ENCODE measurements at regions of chr5 and their contacts with region 1.

Region 1: DNA sequence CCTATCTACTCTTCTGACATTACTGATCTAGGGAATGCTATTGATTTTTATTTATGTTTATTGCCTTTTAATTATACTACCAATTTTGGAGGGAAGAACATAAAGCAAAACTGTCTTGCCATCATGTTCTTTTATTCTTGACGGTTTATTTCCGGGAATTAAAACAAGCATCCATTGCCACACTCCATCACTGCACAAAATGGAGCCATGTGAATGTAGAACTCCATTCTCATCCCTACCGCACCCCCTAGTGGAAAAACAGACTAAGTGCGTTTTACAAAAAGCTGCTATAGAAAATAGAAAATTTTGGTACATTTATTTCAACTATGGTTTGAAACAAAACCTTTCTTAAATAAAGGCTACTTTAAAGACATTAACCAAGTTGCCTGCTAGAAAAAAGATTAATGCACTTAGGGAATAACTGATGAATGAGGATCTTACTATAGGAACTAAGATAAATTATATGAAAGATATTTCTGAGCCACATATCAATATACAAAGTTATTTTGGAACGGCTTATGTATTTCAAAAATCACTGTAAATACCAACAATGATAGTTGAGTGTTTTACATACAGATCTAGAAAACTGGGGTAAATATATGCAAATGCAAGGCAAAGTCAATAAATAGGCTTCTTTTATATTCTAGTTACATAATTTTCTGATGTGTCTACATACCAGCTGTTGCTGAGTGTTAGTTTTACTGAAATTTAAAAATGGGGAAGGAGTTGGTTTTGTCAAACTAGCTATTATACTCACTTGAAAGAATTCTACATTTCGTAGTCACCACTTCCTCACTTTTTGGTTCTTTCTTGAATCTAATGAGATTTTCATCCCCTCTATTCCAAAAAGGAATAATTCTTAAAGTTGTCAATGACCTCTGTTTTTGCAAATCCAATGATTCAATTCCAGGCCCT is 26.5 kb downstream of the OXCT1 start:
- DNase-seq: peak; percentile 49 to 62
- H3K4me3 ChIP-seq: no peak overlapping the region
- H3K4me1 ChIP-seq: no peaks in the 10 kb centered on the region
- H3K27me3 ChIP-seq: no peaks in the 10 kb centered on the region

Region 2: GRCh38 chr5:41176952-41177351 is 666.8 kb before region 1 on chr5:
- in situ Hi-C with region 1: no loop called
- DNase-seq: no peak
- H3K4me3 ChIP-seq: no peak overlapping the region
- H3K4me1 ChIP-seq: no peaks in the 10 kb centered on the region
- H3K27me3 ChIP-seq: no peaks in the 10 kb centered on the region

Region 3: GRCh38 chr5:41707853-41708603 is 135.7 kb before region 1 on chr5:
- in situ Hi-C with region 1: loop called (anchors 25 kb)
- DNase-seq: peak; percentile 33 to 65
- H3K4me3 ChIP-seq: no peak overlapping the region
- H3K4me1 ChIP-seq: no peaks in the 10 kb centered on the region
- H3K27me3 ChIP-seq: no peaks in the 10 kb centered on the region; the same call in 1 of the 2 replicates

Measured in HAP-1 (cell line).